ENCODE measurements at regions of chr3 and their contacts with region 1.

Region 1: DNA sequence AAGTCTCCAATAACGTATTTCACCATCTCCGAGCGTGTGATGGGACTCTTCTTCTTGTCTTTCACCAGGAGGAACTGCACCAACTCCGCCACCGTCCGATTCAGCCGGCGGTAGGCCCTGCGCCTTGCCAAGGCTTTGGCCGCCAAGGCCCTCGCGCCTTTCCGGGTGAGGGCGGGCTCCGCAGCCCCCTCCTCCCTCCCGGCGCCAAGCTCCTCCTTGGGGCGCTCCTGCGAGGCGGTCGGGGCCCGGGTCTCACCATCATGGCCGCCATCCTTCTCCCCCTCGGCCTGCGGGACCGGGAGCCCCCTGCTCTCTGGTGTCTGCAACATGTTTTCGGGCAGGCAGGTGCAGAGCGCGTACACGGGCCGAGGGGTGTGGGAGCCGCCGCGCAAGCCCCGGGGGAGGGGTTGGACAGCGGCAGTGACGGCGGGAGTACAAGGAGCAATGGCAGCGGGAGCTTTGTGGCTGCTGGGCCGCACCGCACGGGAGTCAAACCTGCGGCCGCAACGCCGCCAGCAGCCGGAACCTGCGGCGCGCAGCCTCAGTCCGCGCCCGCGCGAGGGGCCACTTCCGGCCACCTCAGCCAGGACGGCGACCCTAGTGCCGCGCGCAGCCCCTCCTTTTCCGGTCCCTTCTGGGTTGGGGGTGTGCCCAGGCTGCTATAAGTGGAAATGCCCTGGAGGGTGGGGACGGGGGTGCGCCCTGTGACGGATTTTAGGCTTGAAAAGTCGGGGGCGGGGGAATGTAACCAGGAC is at the start of gene MAGEF1:
- DNase-seq: peak; percentile 22 to 85 (median 73)
- ATAC-seq: peak; percentile 83
- H3K4me3 ChIP-seq: peak within 1 kb of the TSS; percentile 62 to 85
- H3K4me3 Mint-ChIP-seq: peak within 1 kb of the TSS; percentile 90
- H3K27ac ChIP-seq: peak within 1 kb of the TSS; percentile 73 to 77
- H3K27ac Mint-ChIP-seq: peak within 1 kb of the TSS; percentile 91
- H3K4me1 ChIP-seq: peaks cover 14% of the 10 kb centered on the region
- H3K4me1 Mint-ChIP-seq: peaks cover 28% of the 10 kb centered on the region
- H3K27me3 ChIP-seq: no peaks in the 10 kb centered on the region
- H3K27me3 Mint-ChIP-seq: no peaks in the 10 kb centered on the region
- CTCF ChIP-seq: no peak
- total RNA-seq, gene MAGEF1: 3.2 to 3.3 TPM

Region 2: GRCh38 chr3:184696697-184697096 is 15.0 kb before region 1 on chr3:
- CTCF ChIA-PET with region 1: no interaction called
- POLR2A ChIA-PET with region 1: no interaction called
- intact Hi-C with region 1: no loop called
- DNase-seq: no peak
- ATAC-seq: no peak
- H3K4me3 ChIP-seq: no peak overlapping the region
- H3K4me3 Mint-ChIP-seq: no peak overlapping the region
- H3K27ac ChIP-seq: no peak overlapping the region
- H3K27ac Mint-ChIP-seq: no peak overlapping the region
- H3K4me1 ChIP-seq: no peaks in the 10 kb centered on the region
- H3K4me1 Mint-ChIP-seq: no peaks in the 10 kb centered on the region
- H3K27me3 ChIP-seq: no peaks in the 10 kb centered on the region
- H3K27me3 Mint-ChIP-seq: no peaks in the 10 kb centered on the region
- CTCF ChIP-seq: no peak

Region 3: GRCh38 chr3:184727357-184728009 is 15.8 kb after region 1 on chr3:
- CTCF ChIA-PET with region 1: interaction called, 11 read pairs
- POLR2A ChIA-PET with region 1: interaction called, 4 read pairs
- intact Hi-C with region 1: no loop called
- DNase-seq: peak in 7 of 9 experiments; percentile 11 to 76 (median 52)
- ATAC-seq: peak; percentile 57
- H3K4me3 ChIP-seq: no peak overlapping the region
- H3K4me3 Mint-ChIP-seq: no peak overlapping the region
- H3K27ac ChIP-seq: no peak overlapping the region
- H3K27ac Mint-ChIP-seq: no peak overlapping the region
- H3K4me1 ChIP-seq: no peaks in the 10 kb centered on the region
- H3K4me1 Mint-ChIP-seq: no peaks in the 10 kb centered on the region
- H3K27me3 ChIP-seq: no peaks in the 10 kb centered on the region
- H3K27me3 Mint-ChIP-seq: peaks cover 14% of the 10 kb centered on the region
- CTCF ChIP-seq: peak; percentile 41

Measured in CD8-positive, alpha-beta T cell (primary cell).